G401 (cell line): ENCODE measurements at regions of chr12 and their contacts with region 1.

Region 1: GRCh38 chr12:56987551-56988053 is 18.7 kb downstream of the ZBTB39 start:
- DNase-seq: peak; percentile 80

Region 2: DNA sequence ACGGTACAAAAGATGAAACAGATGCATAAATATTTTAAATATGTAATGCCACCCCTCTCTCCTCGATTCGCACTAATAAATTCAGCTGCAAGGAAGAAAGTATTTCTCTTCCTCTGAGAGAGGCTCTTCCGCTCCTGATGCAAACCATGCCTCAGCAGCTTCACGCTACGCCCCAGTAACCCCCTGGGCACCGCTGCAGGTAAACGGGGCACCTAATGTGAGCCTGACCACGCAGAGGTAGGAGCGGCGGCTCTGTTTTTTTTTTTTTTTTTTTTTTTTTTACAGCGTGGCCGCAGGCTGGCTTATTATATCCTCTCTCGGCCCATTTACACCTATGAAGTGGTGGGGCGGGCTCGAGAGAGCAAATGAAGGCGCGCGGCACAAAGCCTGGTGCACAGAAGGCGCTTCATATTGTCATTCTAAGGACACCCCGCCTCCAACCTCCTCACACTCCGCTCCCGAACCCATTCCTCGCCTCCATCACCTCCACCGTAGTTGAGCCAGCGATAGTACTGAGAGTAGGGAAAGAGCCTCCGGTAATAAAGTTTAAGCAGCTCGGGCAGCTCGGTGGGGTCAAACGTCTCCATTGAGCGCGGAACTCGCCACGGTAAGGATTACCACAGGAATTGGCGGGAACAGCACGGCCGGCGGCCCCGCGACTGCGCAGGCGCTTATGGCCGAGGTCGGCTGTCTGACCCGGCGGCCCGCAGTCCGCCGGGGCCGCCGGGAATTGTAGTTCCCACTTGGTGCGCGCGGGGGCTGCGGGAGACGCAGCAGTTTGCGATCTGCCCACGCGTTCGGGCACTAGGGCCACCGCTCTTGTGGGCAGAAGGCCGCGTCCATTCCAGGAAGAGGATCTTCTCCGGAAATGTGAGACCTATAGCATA is 235.6 kb before region 1 on chr12 and contains the start of gene PRIM1:
- in situ Hi-C with region 1: loop called (anchors 25 kb)
- DNase-seq: peak; percentile 88
- total RNA-seq, gene PRIM1: 11.9 and 25.5 TPM in 2 replicates

Region 3: GRCh38 chr12:56878010-56878339 is 109.6 kb before region 1 on chr12:
- in situ Hi-C with region 1: no loop called
- DNase-seq: no peak